ENCODE measurements at regions of chr11 and their contacts with region 1.

Region 1: DNA sequence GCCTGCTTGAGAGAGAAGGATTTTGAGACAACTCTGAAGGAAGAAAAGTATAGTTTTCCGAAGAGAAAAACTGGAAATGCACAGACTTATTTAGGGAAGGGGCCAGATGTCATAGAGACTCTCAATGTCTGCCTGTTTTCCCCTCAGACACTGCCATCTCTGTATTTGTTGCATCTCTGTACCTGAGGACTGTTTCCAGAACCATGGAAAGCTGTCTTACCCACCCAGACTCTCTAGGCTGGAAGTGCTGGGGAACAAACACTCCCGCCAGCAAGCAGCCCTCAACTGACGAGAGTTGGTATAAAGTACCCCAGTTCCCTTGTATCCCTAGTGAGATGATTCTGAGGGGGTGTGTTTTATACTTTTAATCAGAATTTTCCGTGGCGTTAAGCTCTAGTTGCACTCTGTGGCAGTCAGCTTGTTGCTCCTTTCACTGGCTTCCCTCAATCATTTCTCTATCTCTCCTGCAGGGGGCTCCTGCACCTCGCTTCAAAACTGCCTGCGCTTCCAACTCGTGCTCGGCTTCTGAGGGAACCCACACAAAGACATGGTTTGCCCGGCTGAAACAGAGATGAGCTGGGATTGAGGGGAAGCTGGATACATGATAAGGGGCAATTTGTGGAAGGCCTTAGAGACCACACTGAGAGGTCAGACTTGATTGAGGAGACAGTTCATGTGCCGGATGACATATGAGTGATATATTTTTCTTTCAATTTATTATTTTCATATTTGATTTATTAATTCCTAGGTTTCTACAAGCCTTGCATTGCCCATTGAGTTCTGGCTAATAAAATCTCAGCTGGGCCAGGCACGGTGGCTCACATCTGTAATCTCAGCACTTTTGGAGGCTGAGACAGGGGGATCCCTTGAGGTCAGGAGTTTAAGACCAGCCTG is 36.9 kb upstream of the CLPB start:
- DNase-seq: peak; percentile 61
- H3K4me3 ChIP-seq: no peak overlapping the region
- H3K27ac ChIP-seq: no peak overlapping the region
- H3K4me1 ChIP-seq: peaks cover 0 to 4% (median 1%) of the 10 kb centered on the region in 4 donors
- H3K27me3 ChIP-seq: peaks cover 49% of the 10 kb centered on the region
- CTCF ChIP-seq: peak; percentile 69 to 82 (median 73)
- EP300 ChIP-seq: no peak
- POLR2A ChIP-seq: no peak

Region 2: DNA sequence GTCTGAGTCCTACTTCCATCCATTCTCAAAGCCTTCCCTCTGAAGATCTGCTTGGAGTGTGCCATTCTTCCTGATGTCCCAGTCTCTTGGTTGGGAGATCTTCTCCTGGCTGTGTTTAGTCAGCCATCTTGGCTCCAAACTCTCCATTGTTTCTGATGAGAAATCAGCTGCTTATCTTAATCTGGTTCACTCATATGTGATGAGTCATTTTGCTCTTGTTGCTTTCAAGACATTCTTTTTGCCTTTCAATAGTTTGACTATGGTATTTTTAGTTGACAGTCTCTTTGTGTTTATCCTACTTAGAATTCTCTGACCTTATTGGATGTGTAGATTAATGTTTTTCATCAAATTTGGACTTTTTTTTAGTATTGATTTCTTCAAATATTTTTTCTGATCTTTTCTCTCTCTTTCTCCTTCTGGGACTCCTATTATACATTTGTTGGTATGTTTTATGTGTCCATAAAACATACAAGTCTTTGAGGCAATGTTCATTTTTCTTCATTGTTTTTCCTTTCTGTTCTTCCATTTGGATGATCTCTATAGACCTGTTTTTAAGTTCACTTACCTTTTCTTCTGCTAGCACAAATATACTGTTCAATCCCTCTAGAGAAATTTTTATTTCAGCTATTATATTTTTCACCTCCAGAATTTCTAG is 40.3 kb after region 1 on chr11:
- in situ Hi-C with region 1: no loop called
- intact Hi-C with region 1: no loop called
- DNase-seq: no peak
- H3K4me3 ChIP-seq: no peak overlapping the region
- H3K27ac ChIP-seq: no peak overlapping the region
- H3K4me1 ChIP-seq: no peaks in the 10 kb centered on the region
- H3K27me3 ChIP-seq: no peaks in the 10 kb centered on the region
- CTCF ChIP-seq: no peak
- EP300 ChIP-seq: no peak
- POLR2A ChIP-seq: no peak

Region 3: DNA sequence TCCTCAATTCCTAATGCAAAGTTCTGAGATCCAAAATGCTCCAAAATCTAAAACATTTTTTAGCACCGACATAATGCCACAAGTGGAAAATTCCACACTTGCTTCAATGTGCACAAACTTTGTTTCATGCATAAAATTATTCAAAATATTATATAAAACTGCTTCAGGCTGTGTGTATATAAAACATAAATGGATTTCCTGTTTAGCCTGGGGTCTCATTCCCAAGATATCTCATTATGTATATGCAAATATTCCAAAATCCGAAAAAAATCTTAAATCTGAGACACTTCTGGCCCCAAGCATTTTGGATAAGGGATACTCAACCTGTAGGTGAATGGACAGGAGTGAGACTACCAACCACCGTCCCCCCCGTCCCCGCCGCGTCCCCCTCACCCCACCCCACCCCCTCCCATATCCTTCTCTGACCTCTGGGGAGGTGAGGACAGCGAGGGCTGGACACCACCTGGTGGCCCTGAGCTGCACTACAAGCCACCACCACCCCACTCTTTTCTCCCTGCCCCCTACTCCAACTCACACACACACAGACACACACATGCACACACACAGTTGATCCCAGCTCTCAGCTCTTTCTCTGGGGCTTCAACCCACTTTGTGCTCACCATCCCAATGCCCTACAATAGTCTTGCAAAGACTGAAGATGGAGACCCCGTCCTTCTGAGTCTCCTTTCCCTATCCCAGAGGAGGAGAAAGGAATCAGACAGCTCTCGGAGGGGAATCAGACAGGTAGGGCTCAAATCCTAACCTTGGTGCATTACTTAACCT is 102.0 kb after region 1 on chr11:
- in situ Hi-C with region 1: loop called in 3 of 4 experiments (anchors 10 kb)
- intact Hi-C with region 1: no loop called
- DNase-seq: peak; percentile 22
- H3K4me3 ChIP-seq: no peak overlapping the region
- H3K27ac ChIP-seq: no peak overlapping the region
- H3K4me1 ChIP-seq: no peaks in the 10 kb centered on the region
- H3K27me3 ChIP-seq: no peaks in the 10 kb centered on the region
- CTCF ChIP-seq: peak; percentile 43 to 65 (median 53)
- EP300 ChIP-seq: no peak
- POLR2A ChIP-seq: no peak

Region 4: GRCh38 chr11:72642884-72643511 is 171.7 kb after region 1 on chr11:
- in situ Hi-C with region 1: loop called in 1 of 4 experiments (anchors 10 kb)
- intact Hi-C with region 1: no loop called
- DNase-seq: peak; percentile 63
- H3K4me3 ChIP-seq: peak overlapping the region; percentile 38 to 65 (median 56)
- H3K27ac ChIP-seq: peak overlapping the region; percentile 8 to 80 (median 52)
- H3K4me1 ChIP-seq: peaks cover 3 to 22% (median 15%) of the 10 kb centered on the region in 4 donors
- H3K27me3 ChIP-seq: peaks cover 18% of the 10 kb centered on the region
- CTCF ChIP-seq: peak; percentile 95 to 99 (median 98)
- EP300 ChIP-seq: no peak
- POLR2A ChIP-seq: no peak

Region 5: GRCh38 chr11:72668611-72669347 is 197.5 kb after region 1 on chr11:
- in situ Hi-C with region 1: loop called in 3 of 4 experiments (anchors 25 kb)
- intact Hi-C with region 1: no loop called
- DNase-seq: no peak
- H3K4me3 ChIP-seq: no peak overlapping the region
- H3K27ac ChIP-seq: no peak overlapping the region
- H3K4me1 ChIP-seq: no peaks in the 10 kb centered on the region
- H3K27me3 ChIP-seq: peaks cover 60% of the 10 kb centered on the region
- CTCF ChIP-seq: no peak
- EP300 ChIP-seq: no peak
- POLR2A ChIP-seq: no peak

Measured in transverse colon (tissue), 4 donors.